Activated B cell treated with CpG ODN at 0.5 μM for 24 hours (primary cell): ENCODE measurements at regions of chr6 and their contacts with region 1.

Region 1: DNA sequence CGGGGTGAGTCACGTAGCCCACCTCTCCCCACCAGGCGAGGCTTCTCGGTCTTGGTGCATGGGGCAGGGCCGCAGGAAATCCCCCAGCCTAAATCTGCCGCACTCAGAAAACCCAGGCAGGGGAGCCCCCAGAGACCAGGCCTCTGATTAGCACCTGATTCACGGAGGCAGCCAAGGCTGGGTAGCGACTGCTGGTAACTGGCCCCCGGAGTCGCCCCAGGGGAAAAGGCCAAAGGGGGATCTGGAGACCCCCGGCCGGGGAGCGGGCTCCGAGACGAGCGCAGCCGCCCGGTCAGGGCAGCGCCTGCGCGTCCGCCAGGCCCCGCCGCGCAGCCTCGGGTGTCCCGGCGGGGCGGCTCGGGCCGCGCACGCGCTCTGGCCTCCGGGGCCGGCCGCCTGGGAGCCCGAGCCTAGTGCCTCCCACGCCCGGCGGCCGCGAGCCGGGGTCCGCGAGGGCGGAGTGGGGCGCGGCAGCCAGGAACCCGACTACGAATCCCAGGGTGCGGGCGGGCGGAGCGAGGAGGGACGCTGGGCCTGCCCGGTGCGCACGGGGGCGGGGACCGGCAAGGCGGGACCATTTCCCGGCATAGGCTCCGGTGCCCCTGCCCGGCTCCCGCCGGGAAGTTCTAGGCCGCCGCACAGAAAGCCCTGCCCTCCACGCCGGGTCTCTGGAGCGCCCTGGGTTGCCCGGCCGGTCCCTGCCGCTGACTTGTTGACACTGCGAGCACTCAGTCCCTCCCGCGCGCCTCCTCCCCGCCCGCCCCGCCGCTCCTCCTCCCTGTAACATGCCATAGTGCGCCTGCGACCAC is at the start of gene DUSP22:
- DNase-seq: peak; percentile 95
- ATAC-seq: peak; percentile 63
- H3K4me3 Mint-ChIP-seq: peak within 1 kb of the TSS; percentile 97
- H3K27ac Mint-ChIP-seq: peak within 1 kb of the TSS; percentile 93
- H3K4me1 Mint-ChIP-seq: peaks cover 61% of the 10 kb centered on the region
- H3K27me3 Mint-ChIP-seq: no peaks in the 10 kb centered on the region
- CTCF ChIP-seq: no peak
- total RNA-seq, gene DUSP22: 137 and 153 TPM in 2 replicates

Region 2: GRCh38 chr6:227074-227782 is 64.7 kb before region 1 on chr6:
- CTCF ChIA-PET with region 1: interaction called, 10 read pairs
- POLR2A ChIA-PET with region 1: interaction called, 44 read pairs
- intact Hi-C with region 1: loop called (anchors 1 kb)
- DNase-seq: no peak
- ATAC-seq: peak; percentile 90
- H3K4me3 Mint-ChIP-seq: peak overlapping the region; percentile 55
- H3K27ac Mint-ChIP-seq: peak overlapping the region; percentile 80
- H3K4me1 Mint-ChIP-seq: peaks cover 67% of the 10 kb centered on the region
- H3K27me3 Mint-ChIP-seq: no peaks in the 10 kb centered on the region
- CTCF ChIP-seq: no peak

Region 3: GRCh38 chr6:305371-306206 is 13.7 kb after region 1 on chr6:
- CTCF ChIA-PET with region 1: no interaction called
- POLR2A ChIA-PET with region 1: interaction called, 13 read pairs
- intact Hi-C with region 1: no loop called
- DNase-seq: no peak
- ATAC-seq: peak; percentile 69
- H3K4me3 Mint-ChIP-seq: no peak overlapping the region
- H3K27ac Mint-ChIP-seq: no peak overlapping the region
- H3K4me1 Mint-ChIP-seq: peaks cover 26% of the 10 kb centered on the region
- H3K27me3 Mint-ChIP-seq: no peaks in the 10 kb centered on the region
- CTCF ChIP-seq: no peak

Region 4: DNA sequence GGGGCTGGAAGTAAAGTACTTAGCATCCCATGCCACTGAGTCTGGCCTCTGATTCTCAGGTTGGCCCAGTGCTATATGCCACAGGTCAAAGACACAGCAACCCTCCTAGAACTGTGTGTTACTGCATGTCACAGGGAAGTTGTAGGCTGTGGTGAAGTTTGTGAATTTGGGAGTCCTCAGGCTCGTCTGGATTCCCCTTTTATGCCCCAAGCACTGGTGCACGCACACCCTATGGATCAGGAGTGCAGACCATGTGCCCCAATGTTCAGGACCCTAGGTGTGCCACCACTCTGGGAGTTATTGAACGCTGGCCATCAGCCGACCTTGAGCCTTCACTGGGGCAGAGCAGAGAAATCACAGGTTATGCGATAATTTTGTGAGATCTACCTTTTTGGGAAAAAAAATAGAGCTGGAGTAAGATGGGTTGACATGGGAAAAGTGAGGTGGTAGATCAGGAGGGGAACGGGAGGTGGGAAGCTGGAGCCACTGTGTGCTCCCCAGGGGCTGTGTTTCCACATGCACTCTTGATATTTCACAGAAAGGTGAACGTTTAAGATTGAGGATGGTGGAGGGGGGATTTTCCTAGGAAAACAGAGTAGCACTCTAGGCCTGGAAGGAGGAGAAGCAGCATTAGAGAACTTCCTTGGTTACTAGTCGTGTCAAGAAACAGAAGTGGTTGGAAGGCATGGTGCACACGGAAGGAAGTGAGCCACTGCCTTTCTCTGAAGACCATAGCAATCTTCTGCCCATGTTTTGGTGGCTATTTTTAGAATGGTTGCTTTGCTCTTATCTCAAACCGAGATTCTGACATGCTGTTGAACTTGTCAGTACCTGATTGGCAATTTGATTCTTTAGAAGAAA is 44.5 kb after region 1 on chr6:
- CTCF ChIA-PET with region 1: interaction called, 3 read pairs
- POLR2A ChIA-PET with region 1: interaction called, 44 read pairs
- intact Hi-C with region 1: loop called (anchors 2 kb)
- DNase-seq: no peak
- ATAC-seq: peak; percentile 57
- H3K4me3 Mint-ChIP-seq: peak overlapping the region; percentile 62
- H3K27ac Mint-ChIP-seq: peak overlapping the region; percentile 78
- H3K4me1 Mint-ChIP-seq: peaks cover 75% of the 10 kb centered on the region
- H3K27me3 Mint-ChIP-seq: no peaks in the 10 kb centered on the region
- CTCF ChIP-seq: no peak

Region 5: GRCh38 chr6:379367-380181 is 87.7 kb after region 1 on chr6:
- CTCF ChIA-PET with region 1: no interaction called
- POLR2A ChIA-PET with region 1: interaction called, 14 read pairs
- intact Hi-C with region 1: no loop called
- DNase-seq: no peak
- ATAC-seq: peak; percentile 38
- H3K4me3 Mint-ChIP-seq: peak overlapping the region; percentile 12
- H3K27ac Mint-ChIP-seq: peak overlapping the region; percentile 33
- H3K4me1 Mint-ChIP-seq: peaks cover 58% of the 10 kb centered on the region
- H3K27me3 Mint-ChIP-seq: no peaks in the 10 kb centered on the region
- CTCF ChIP-seq: no peak

Region 6: GRCh38 chr6:474453-475185 is 182.7 kb after region 1 on chr6:
- CTCF ChIA-PET with region 1: no interaction called
- POLR2A ChIA-PET with region 1: interaction called, 7 read pairs
- intact Hi-C with region 1: loop called (anchors 1 kb)
- DNase-seq: peak; percentile 40
- ATAC-seq: peak; percentile 66
- H3K4me3 Mint-ChIP-seq: peak overlapping the region; percentile 48
- H3K27ac Mint-ChIP-seq: peak overlapping the region; percentile 39
- H3K4me1 Mint-ChIP-seq: peaks cover 60% of the 10 kb centered on the region
- H3K27me3 Mint-ChIP-seq: peaks cover 2% of the 10 kb centered on the region
- CTCF ChIP-seq: no peak